AG04450 (cell line): ENCODE measurements at regions of chr11 and their contacts with region 1.

Region 1: GRCh38 chr11:33344611-33345010 is 87.4 kb downstream of the HIPK3 start:
- DNase-seq: no peak
- H3K4me3 ChIP-seq: no peak overlapping the region
- H3K27ac ChIP-seq: no peak overlapping the region
- H3K27me3 ChIP-seq: no peaks in the 10 kb centered on the region
- CTCF ChIP-seq: peak; percentile 37; the same call in 1 of the 2 replicates

Region 2: DNA sequence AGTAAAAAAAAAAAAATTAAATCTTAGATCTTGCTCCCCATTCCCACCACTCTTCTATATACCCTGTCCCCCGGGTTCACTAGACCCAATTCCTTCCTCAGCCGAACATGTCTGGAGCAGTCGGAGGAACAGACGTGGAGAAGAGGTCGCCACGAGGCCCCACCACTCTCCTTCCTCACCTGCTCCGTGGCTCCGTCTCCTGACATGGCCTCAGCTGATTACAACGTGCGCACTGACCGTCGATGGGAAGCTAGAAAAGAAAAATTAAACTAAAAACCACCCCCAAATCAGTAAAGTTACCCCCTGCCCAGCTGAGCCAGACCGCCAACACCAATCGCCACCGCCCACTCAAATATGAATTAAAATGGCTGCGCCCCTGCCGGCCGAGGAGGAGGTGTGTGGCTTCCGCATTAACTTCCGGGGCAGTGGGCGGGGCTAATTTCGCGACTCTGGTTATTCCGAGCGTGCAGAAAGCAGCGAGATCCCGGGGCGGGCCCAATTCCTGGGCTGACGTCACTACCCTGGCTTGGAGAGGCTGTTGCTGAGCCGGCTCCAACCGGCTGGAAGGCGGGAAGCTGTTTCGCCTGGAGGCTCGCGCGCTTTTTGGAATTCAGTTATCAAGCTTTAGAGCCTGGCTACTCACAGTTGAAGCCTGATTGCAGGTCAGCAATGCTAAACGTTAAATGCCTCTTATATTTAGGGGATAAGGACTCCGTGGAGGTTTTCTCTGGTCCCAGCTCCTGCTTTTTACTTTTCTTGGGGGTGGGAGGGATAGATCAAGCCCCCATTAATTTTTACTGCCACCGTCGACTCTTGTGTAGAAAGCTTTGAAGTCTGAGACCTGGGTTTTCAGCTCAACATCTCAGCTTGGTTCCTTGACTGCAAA is 183.2 kb before region 1 on chr11 and contains the start of gene CSTF3:
- CTCF ChIA-PET with region 1: interaction called, 33 read pairs
- POLR2A ChIA-PET with region 1: no interaction called
- DNase-seq: peak; percentile 96
- H3K4me3 ChIP-seq: peak within 1 kb of the TSS; percentile 90
- H3K27ac ChIP-seq: peak within 1 kb of the TSS; percentile 81
- H3K27me3 ChIP-seq: no peaks in the 10 kb centered on the region
- CTCF ChIP-seq: peak; percentile 54
- polyA plus RNA-seq, gene CSTF3: 29.9 and 38.6 TPM in 2 replicates

Region 3: DNA sequence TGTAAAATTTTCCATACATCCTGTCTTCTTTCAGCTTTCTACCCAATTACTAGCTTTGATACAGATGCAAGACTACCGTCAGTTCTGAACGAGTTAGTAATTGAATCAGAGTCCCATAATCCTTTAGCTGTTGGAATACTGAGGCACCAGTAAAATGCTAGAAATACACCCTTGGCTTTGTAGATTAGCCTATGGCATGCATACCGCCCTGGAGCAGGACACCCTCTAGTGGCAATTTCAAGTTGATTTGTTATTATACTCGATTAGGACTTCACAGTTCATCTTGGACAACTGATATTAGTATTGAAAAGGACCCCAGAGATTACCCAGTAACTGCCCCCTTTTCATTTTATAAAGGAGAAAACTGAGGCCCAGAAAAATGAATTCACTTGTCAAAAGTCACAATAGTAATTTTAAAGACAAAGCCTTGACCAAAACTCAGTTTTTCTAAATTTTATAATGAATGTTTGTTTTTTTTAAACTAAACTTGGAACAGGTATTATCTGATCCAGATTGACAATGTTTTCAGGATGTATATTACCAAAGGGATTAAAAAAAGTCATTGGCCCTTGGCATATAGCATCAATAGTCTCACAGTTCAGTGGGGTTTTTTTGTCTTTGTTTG is 14.8 kb before region 1 on chr11:
- CTCF ChIA-PET with region 1: interaction called, 10 read pairs
- POLR2A ChIA-PET with region 1: no interaction called
- DNase-seq: peak; percentile 27
- H3K4me3 ChIP-seq: no peak overlapping the region
- H3K27ac ChIP-seq: no peak overlapping the region
- H3K27me3 ChIP-seq: no peaks in the 10 kb centered on the region
- CTCF ChIP-seq: peak; percentile 72

Region 4: GRCh38 chr11:33687733-33688479 is 343.3 kb after region 1 on chr11:
- CTCF ChIA-PET with region 1: interaction called, 10 read pairs
- POLR2A ChIA-PET with region 1: no interaction called
- DNase-seq: no peak
- H3K4me3 ChIP-seq: no peak overlapping the region
- H3K27ac ChIP-seq: no peak overlapping the region
- H3K27me3 ChIP-seq: no peaks in the 10 kb centered on the region
- CTCF ChIP-seq: peak; percentile 82

Region 5: GRCh38 chr11:33753304-33753967 is 408.8 kb after region 1 on chr11:
- CTCF ChIA-PET with region 1: no interaction called
- POLR2A ChIA-PET with region 1: interaction called, 11 read pairs
- DNase-seq: peak; percentile 30
- H3K4me3 ChIP-seq: no peak overlapping the region
- H3K27ac ChIP-seq: no peak overlapping the region
- H3K27me3 ChIP-seq: no peaks in the 10 kb centered on the region
- CTCF ChIP-seq: no peak